PC-9 (cell line): ENCODE measurements at regions of chr2 and their contacts with region 1.

Region 1: GRCh38 chr2:182179176-182179575 is 193.5 kb downstream of the PPP1R1C start:
- DNase-seq: no peak
- H3K4me3 ChIP-seq: no peak overlapping the region
- H3K27ac ChIP-seq: no peak overlapping the region
- H3K4me1 ChIP-seq: no peaks in the 10 kb centered on the region
- H3K27me3 ChIP-seq: no peaks in the 10 kb centered on the region
- CTCF ChIP-seq: no peak

Region 2: DNA sequence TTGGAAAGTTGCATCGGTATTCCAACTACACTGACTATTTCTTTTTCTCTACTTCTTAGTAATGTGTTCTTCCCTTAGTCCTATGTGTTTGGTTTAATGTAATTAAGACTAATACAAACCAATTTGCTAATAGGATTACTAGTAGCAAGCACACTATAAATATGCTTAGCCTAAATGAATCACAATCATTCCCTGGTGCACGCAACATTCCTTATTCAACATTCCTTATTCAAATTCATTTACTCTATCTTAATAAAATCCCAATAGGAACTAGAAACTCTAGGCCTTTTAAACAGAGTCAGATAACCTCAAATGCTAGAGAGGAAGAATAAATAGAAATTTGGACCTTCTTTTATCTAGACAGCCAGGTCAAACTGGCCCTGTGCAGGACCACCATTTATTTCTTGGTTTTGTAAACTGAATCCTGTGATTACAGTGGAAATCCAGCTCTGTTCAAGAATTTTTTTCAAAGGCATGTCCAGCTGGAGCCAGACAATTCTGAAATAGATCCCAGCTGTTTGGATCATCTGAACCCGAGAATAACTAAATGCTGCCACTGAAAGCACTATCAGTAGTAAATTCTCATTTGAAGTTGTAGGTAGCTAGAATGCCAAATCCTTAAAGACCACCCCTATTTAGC is 90.4 kb before region 1 on chr2:
- CTCF ChIA-PET with region 1: no interaction called
- POLR2A ChIA-PET with region 1: no interaction called
- intact Hi-C with region 1: no loop called
- DNase-seq: no peak
- H3K4me3 ChIP-seq: no peak overlapping the region
- H3K27ac ChIP-seq: no peak overlapping the region
- H3K4me1 ChIP-seq: no peaks in the 10 kb centered on the region
- H3K27me3 ChIP-seq: no peaks in the 10 kb centered on the region
- CTCF ChIP-seq: no peak

Region 3: GRCh38 chr2:182144777-182145165 is 34.4 kb before region 1 on chr2:
- CTCF ChIA-PET with region 1: no interaction called
- POLR2A ChIA-PET with region 1: interaction called, 10 read pairs
- intact Hi-C with region 1: no loop called
- DNase-seq: no peak
- H3K4me3 ChIP-seq: no peak overlapping the region
- H3K27ac ChIP-seq: no peak overlapping the region
- H3K4me1 ChIP-seq: no peaks in the 10 kb centered on the region
- H3K27me3 ChIP-seq: no peaks in the 10 kb centered on the region
- CTCF ChIP-seq: no peak

Region 4: DNA sequence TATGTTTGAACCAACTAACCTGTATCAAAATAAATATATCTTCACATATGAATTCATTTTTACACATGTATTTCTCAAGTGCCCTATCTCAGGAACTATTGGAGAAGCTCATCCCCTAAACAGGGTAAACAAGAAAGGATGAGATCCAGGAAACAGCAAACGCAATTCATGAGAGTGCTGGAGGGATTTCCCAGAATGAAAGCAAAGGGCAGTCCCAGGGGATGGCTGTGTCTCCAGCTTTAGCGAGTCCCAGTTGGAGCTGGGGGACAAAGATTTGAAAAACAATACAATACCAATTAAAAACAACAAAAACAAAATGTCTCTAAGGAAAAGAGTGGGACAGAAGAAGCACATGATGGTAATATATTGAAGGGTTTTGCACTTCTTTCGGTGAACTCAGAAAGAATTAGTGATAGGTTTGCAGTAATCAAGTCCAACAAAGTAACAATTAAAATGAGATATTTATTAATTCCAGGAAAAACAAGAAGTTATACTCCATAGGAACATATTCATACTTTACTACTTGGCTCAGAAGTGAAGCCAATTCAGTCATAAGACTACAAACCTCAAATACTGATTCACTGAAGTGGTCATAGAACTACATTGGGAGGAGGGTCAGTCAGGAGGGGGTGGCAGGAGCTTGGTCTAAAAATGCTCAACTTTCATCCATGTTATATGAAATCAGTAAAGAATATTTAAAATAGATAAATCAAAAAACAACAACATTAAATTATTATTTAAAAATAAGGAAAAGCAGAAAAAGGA is 320.7 kb after region 1 on chr2:
- CTCF ChIA-PET with region 1: no interaction called
- POLR2A ChIA-PET with region 1: no interaction called
- intact Hi-C with region 1: no loop called
- DNase-seq: no peak
- H3K4me3 ChIP-seq: no peak overlapping the region
- H3K27ac ChIP-seq: no peak overlapping the region
- H3K4me1 ChIP-seq: no peaks in the 10 kb centered on the region
- H3K27me3 ChIP-seq: no peaks in the 10 kb centered on the region
- CTCF ChIP-seq: no peak

Region 5: DNA sequence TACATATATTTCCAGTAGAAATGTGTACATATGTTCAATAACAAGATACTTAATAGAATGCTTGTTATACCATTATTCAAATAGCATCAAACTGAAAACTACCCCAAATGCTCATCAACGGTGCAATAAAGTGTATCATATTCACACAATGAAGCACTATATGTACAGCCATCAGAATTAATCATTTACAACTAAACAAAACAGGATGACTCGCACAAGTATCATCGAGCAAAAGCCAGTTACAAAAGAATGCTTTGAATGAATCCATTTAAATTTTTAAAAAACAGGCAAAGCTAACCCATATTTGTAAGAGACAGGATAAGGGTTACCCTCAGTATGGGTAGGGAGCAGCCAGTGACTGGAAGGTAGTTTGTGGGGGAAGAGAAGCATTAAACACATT is 380.4 kb after region 1 on chr2:
- CTCF ChIA-PET with region 1: no interaction called
- POLR2A ChIA-PET with region 1: no interaction called
- intact Hi-C with region 1: no loop called
- DNase-seq: no peak
- H3K4me3 ChIP-seq: no peak overlapping the region
- H3K27ac ChIP-seq: no peak overlapping the region
- H3K4me1 ChIP-seq: no peaks in the 10 kb centered on the region
- H3K27me3 ChIP-seq: no peaks in the 10 kb centered on the region
- CTCF ChIP-seq: no peak